ENCODE measurements at regions of chr9 and their contacts with region 1.

Region 1: DNA sequence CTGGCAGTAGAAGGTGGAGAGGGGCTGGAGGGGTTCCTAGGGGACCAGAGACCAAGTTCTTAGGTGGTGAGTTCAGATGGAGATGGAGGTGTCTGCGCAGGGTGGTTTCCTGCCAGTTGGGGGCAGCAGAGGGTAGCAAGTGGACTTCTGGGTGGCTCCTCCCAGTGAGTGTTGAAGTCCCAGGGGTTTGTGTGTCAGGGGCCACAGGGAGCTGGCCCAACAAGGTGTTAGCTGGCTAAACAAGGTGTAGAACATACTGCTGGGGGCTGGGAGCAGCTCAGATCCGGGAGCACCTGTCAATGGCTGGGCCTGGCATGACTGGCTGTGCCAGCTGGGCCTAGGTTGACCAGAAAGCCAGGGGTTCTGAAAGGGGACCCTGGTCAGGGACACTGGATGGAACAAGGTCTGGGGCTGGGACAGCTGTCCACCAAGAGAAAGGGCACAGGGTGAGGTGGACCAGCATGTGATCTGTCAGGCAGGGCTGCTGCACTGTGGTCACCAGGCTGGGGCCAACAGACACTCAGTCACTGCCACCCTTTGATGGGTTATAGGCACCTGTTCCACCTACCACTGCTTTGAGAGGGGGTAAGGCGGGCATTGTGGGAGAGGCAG is 35.6 kb downstream of the DAB2IP start:
- DNase-seq: peak; percentile 73
- H3K4me3 ChIP-seq: no peak overlapping the region
- H3K27ac ChIP-seq: no peak overlapping the region
- H3K4me1 ChIP-seq: no peaks in the 10 kb centered on the region
- H3K27me3 ChIP-seq: no peaks in the 10 kb centered on the region
- CTCF ChIP-seq: peak; percentile 91

Region 2: DNA sequence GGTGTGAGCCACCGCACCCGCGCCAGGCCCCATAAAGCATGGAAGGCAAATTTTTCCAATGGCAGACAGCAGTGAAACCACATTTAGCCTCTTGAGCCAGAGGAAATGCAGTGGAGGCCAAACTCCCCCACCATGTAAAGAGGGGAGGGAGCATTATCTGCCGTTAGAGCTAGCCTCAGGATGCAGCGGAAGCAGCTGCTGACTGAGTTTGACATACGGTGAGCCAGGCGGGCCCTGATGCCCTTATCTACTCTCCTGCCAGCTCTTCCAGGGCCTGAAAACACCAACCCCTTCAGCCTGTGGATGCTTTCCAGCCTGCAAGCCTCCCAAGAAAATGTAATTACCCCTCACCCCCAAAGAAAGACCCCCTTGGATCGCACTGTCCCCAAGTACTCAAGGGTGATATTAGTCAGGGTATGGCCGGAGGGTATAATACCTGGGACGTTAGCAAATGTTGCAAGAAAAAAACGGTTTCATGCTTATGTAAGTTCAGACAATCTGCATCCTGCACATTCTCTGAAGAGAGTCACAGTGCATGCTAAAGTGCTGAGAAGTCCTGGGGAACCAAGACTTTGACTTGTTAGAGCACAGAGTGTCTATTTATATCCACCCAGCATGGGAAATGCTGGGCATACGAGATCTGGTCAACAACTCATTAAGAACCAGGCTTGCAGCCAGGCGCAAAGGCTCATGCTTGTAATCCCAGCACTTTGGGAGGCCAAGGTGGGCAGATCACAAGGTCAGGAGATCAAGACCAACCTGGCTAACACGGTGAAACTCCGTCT is 176.1 kb before region 1 on chr9:
- CTCF ChIA-PET with region 1: no interaction called
- POLR2A ChIA-PET with region 1: no interaction called
- intact Hi-C with region 1: no loop called
- DNase-seq: no peak
- H3K4me3 ChIP-seq: no peak overlapping the region
- H3K27ac ChIP-seq: no peak overlapping the region
- H3K4me1 ChIP-seq: no peaks in the 10 kb centered on the region
- H3K27me3 ChIP-seq: no peaks in the 10 kb centered on the region
- CTCF ChIP-seq: no peak

Region 3: GRCh38 chr9:121640076-121640475 is 47.0 kb before region 1 on chr9:
- CTCF ChIA-PET with region 1: interaction called, 16 read pairs
- POLR2A ChIA-PET with region 1: no interaction called
- intact Hi-C with region 1: no loop called
- DNase-seq: peak; percentile 72
- H3K4me3 ChIP-seq: no peak overlapping the region
- H3K27ac ChIP-seq: no peak overlapping the region
- H3K4me1 ChIP-seq: no peaks in the 10 kb centered on the region
- H3K27me3 ChIP-seq: no peaks in the 10 kb centered on the region
- CTCF ChIP-seq: peak; percentile 75

Region 4: DNA sequence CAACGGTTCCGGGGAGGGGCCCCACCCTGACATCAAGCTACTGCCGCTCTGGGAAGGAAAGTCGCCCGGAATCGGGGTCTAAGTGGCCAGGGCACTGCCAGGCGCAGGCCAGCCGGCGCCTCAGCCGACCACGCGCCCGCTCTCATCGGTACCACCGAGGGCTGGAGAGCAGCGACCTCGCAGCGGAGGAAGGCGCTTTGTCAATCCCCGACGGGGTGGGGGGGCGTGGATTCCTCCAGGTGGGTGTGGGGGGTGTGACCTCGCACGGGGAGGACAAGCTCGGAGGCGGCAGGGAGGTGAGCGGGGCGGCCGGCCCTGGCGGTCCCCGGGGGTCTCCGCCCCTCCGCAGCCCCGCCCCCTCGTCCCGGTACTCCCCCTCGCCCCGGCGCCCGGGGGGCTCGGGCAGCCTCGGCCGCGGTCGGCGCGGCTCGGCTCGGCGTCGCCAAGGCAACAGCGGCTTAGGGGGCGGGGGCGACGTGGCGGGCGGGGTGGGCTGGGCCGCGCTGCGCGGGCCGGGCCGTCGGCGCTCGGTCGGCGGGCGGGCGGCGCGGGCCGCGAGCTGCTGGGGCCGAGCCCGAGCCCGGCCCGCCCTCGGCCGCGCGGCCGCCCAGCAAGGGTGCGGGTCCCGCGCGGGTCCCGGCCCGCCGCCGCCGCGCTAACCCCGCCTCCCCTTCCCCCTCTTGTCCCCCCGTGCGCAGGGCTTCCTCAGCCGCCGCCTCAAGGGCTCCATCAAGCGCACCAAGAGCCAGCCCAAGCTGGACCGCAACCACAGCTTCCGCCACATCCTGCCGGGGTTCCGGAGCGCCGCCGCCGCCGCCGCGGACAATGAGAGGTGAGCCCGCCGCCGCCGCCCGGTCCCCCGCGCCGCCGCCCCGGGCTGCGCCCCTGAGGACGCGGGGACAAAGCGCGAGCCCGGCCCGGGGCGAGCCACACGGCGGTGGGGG is 11.9 kb after region 1 on chr9:
- CTCF ChIA-PET with region 1: interaction called, 19 read pairs
- POLR2A ChIA-PET with region 1: no interaction called
- intact Hi-C with region 1: no loop called
- DNase-seq: peak; percentile 69
- H3K4me3 ChIP-seq: peak overlapping the region; percentile 55
- H3K27ac ChIP-seq: no peak overlapping the region
- H3K4me1 ChIP-seq: peaks cover 10% of the 10 kb centered on the region
- H3K27me3 ChIP-seq: no peaks in the 10 kb centered on the region
- CTCF ChIP-seq: no peak